Activated B cell treated with CpG ODN at 0.5 μM for 24 hours (primary cell): ENCODE measurements at regions of chr5 and their contacts with region 1.

Region 1: DNA sequence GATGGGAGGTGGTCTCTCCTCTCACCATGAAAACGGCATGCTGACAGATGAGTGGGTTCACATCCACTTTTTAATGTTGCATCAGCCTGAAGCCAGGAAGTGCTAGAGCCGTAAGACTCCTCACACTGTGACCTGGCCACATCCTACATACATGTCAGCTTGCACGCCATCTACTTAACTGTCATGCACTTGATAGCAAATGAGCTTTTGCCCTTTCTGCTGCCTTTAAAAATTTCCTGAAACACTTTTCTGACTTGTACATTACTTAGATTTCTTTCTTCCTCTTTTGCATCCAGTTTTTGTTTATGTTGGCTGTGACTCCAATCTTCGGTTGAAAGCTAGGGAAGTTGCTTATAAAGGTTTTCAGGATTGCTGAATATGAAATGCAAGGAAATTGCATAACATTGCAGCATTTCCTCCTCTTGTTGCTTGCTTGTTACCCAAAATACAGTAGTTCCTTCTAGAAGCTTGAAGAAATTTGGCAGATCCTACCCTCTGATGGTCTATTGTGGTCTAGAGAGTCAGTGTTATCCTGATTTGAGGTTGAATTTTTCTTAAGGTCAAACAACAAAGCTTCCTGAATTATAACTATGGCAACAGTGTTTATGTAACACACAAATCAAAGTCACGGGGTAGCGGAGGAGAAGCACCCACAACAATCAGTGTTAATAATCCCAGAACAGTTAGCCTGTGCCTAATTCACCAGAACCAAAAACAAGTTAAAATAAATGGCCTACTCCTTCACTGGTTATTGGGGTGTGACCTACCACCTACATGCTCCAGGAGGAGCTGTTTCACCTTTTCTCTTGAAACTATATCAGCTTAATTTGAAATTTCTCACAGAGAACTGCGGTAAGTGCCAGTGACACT is 232.5 kb downstream of the ARHGAP26 start:
- DNase-seq: no peak
- ATAC-seq: peak; percentile 80
- H3K4me3 Mint-ChIP-seq: peak overlapping the region; percentile 13
- H3K27ac Mint-ChIP-seq: peak overlapping the region; percentile 94
- H3K4me1 Mint-ChIP-seq: peaks cover 85% of the 10 kb centered on the region
- H3K27me3 Mint-ChIP-seq: no peaks in the 10 kb centered on the region
- CTCF ChIP-seq: no peak

Region 2: DNA sequence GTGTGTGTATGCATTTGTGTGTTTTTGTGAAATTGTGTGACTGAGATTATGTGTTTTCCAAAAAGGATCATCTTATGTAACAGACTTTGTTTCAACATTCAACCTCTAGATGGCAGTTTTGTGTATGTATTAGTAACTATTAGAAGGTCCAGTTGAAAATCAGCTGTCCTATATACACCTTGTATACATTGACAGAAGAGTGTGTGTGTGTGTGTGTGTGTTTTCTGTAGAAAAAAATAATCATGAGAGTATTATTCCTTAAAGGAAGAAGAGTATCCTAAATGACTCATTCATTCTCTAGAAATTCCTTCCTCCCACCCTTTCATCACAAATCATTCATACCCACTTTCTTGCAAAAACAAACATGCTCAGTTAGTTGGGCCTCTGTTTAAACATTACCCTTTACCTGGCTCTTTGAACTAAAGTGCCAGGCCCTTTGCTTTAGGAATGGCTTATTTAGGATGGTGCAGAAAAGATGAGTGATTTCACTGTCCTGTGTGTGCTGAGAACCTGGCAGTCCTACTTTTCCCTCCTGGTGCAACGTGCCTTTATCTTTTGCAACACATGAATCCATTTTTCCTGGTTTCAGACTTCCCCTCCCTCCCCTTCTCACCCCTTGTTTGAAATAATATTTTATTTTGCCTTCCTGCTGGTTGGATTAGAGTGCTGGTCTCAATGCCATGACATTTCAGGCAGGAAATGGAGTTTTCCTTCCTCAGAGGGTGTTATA is 80.3 kb before region 1 on chr5:
- CTCF ChIA-PET with region 1: interaction called, 14 read pairs
- POLR2A ChIA-PET with region 1: interaction called, 10 read pairs
- intact Hi-C with region 1: loop called (anchors 2 kb)
- DNase-seq: no peak
- ATAC-seq: no peak
- H3K4me3 Mint-ChIP-seq: no peak overlapping the region
- H3K27ac Mint-ChIP-seq: no peak overlapping the region
- H3K4me1 Mint-ChIP-seq: peaks cover 7% of the 10 kb centered on the region
- H3K27me3 Mint-ChIP-seq: no peaks in the 10 kb centered on the region
- CTCF ChIP-seq: no peak

Region 3: GRCh38 chr5:143290125-143290524 is 287.4 kb after region 1 on chr5:
- CTCF ChIA-PET with region 1: interaction called, 3 read pairs
- POLR2A ChIA-PET with region 1: no interaction called
- intact Hi-C with region 1: loop called (anchors 5 kb)
- DNase-seq: no peak
- ATAC-seq: no peak
- H3K4me3 Mint-ChIP-seq: no peak overlapping the region
- H3K27ac Mint-ChIP-seq: no peak overlapping the region
- H3K4me1 Mint-ChIP-seq: peaks cover 18% of the 10 kb centered on the region
- H3K27me3 Mint-ChIP-seq: no peaks in the 10 kb centered on the region
- CTCF ChIP-seq: no peak

Region 4: DNA sequence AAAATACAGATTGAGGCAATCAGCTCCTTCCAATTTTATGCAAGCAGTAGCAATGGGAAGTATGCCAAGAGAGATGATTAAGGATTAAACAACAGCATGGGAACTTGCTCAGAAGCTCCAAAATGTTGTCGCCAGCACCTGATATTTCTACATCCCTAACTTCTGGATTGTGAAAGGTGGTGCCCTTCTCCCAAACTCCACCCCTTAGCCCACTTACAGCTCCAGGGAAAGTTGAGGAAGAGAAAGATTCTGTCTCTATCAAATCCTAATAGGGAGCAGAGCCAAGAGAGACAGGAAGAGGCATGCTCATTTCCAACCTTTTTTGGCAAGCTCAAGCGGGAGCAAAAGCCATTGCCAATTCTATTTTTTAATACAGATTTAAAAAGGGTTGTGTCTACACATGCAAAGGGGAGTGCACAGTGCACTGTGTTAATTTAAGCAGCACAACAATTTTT is 493.2 kb after region 1 on chr5:
- CTCF ChIA-PET with region 1: no interaction called
- POLR2A ChIA-PET with region 1: no interaction called
- intact Hi-C with region 1: no loop called
- DNase-seq: no peak
- ATAC-seq: no peak
- H3K4me3 Mint-ChIP-seq: no peak overlapping the region
- H3K27ac Mint-ChIP-seq: no peak overlapping the region
- H3K4me1 Mint-ChIP-seq: no peaks in the 10 kb centered on the region
- H3K27me3 Mint-ChIP-seq: no peaks in the 10 kb centered on the region
- CTCF ChIP-seq: no peak

Region 5: DNA sequence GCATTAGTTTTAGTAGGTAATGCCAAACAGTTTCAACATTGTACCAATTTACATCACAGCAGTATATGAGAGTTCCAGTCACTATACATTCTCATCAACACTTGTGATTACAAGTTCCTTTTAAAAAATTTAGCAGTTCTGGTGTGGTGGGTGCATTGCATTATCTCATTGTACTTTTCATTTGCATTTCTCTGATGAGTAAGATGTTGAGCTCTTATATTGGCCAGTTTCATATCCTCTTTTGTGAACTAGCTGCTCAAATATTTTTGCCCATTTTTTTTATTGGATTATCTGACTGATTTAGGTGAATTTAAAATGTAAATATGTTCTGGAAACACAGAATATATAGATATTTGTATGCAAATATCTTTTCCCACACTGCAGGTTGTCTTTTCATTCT is 561.7 kb after region 1 on chr5:
- CTCF ChIA-PET with region 1: interaction called, 4 read pairs
- POLR2A ChIA-PET with region 1: no interaction called
- intact Hi-C with region 1: loop called (anchors 10 kb)
- DNase-seq: no peak
- ATAC-seq: peak; percentile 91
- H3K4me3 Mint-ChIP-seq: peak overlapping the region; percentile 46
- H3K27ac Mint-ChIP-seq: peak overlapping the region; percentile 53
- H3K4me1 Mint-ChIP-seq: peaks cover 25% of the 10 kb centered on the region
- H3K27me3 Mint-ChIP-seq: no peaks in the 10 kb centered on the region
- CTCF ChIP-seq: no peak

Region 6: GRCh38 chr5:144191998-144192397 is 1189.3 kb after region 1 on chr5:
- CTCF ChIA-PET with region 1: interaction called, 7 read pairs
- POLR2A ChIA-PET with region 1: no interaction called
- intact Hi-C with region 1: loop called (anchors 1 kb)
- DNase-seq: no peak
- ATAC-seq: peak; percentile 75
- H3K4me3 Mint-ChIP-seq: no peak overlapping the region
- H3K27ac Mint-ChIP-seq: no peak overlapping the region
- H3K4me1 Mint-ChIP-seq: peaks cover 36% of the 10 kb centered on the region
- H3K27me3 Mint-ChIP-seq: no peaks in the 10 kb centered on the region
- CTCF ChIP-seq: no peak